ENCODE measurements at regions of chr6 and their contacts with region 1.

Region 1: DNA sequence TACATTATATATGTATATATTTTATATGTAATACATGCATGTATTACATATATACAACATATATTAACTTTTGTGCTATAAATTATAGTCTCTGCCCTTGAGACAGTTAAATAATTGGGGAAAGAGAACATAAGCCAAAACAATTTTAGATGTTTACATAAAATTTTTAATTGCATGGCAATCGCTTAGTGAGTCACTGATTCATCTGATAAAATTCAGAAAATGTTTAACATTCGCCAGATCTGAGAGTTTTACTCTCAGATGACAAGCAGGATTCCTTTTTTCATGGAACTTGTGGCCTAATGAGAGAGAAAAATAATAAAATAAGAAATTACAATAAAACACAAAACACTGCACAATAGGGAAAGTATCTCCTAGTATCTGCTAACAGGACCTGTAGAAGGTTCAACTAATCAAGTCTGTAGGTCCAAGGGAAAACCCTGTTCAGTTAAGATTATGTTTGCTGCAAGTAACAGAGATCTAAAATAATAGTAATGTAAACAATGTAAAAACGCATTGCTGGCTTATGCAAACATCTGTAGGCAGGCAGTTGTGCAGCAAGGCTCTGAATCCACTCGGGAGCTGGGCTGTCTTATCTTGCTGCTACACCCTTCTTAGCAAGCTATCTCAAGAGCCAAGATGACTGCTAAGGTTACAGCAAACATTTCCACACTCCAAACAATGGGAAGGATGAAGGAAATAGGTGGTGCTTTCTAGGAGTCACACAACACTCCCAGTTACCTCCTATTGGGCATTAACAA is 397.5 kb upstream of the NRSN1 start:
- DNase-seq: peak; percentile 20
- ATAC-seq: peak; percentile 97
- H3K4me3 ChIP-seq: no peak overlapping the region
- H3K27ac ChIP-seq: no peak overlapping the region
- H3K4me1 ChIP-seq: peaks cover 6% of the 10 kb centered on the region; the same call in 1 of the 2 replicates
- H3K27me3 ChIP-seq: peaks cover 7% of the 10 kb centered on the region; the same call in 1 of the 2 replicates
- CTCF ChIP-seq: no peak

Region 2: DNA sequence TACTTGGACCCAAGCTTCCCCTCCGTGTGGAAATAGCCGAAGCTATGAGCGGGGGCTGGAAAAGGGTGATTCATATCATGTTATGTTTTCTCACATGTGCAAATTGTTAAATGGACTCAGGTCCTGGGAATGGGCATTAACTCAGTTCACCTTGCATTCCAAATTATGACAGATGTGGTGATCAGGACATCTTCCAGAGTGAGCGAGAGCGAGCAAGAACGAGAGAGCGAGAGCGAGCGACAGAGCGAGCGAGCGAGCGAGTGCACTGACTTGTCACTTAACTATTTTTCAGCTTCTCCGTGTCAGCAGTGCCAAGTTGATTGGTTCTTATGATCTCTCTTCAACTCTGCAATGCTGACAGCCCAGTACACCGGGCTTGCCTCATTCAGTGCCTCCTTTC is 39.9 kb before region 1 on chr6:
- CTCF ChIA-PET with region 1: no interaction called
- POLR2A ChIA-PET with region 1: no interaction called
- intact Hi-C with region 1: loop called (anchors 5 kb)
- DNase-seq: no peak
- ATAC-seq: no peak
- H3K4me3 ChIP-seq: no peak overlapping the region
- H3K27ac ChIP-seq: no peak overlapping the region
- H3K4me1 ChIP-seq: 0 out of 2 replicates have a peak, but pooled peaks cover 8% of the 10 kb centered on the region
- H3K27me3 ChIP-seq: 0 out of 2 replicates have a peak, but pooled peaks cover 4% of the 10 kb centered on the region
- CTCF ChIP-seq: no peak

Measured in PC-3 (cell line).